Activated naive CD4-positive, alpha-beta T cell treated with anti-CD3 and anti-CD28 coated beads for 36 hours (primary cell): ENCODE measurements at regions of chr12 and their contacts with region 1.

Region 1: GRCh38 chr12:122726080-122726558 is 4.5 kb downstream of the HCAR1 start:
- DNase-seq: peak; percentile 61
- H3K4me3 Mint-ChIP-seq: peak overlapping the region; percentile 50
- H3K27ac Mint-ChIP-seq: peak overlapping the region; percentile 85
- H3K4me1 Mint-ChIP-seq: peaks cover 76% of the 10 kb centered on the region
- H3K27me3 Mint-ChIP-seq: no peaks in the 10 kb centered on the region

Region 2: GRCh38 chr12:122078141-122079032 is 647.7 kb before region 1 on chr12 and contains the start of gene MLXIP:
- CTCF ChIA-PET with region 1: no interaction called
- intact Hi-C with region 1: loop called (anchors 10 kb)
- DNase-seq: peak; percentile 91
- H3K4me3 Mint-ChIP-seq: peak within 1 kb of the TSS; percentile 85
- H3K27ac Mint-ChIP-seq: peak within 1 kb of the TSS; percentile 51
- H3K4me1 Mint-ChIP-seq: peaks cover 47% of the 10 kb centered on the region
- H3K27me3 Mint-ChIP-seq: no peaks in the 10 kb centered on the region
- total RNA-seq, gene MLXIP: 18.8 to 22.0 TPM

Region 3: GRCh38 chr12:122547330-122547729 is 178.8 kb before region 1 on chr12:
- CTCF ChIA-PET with region 1: no interaction called
- intact Hi-C with region 1: no loop called
- DNase-seq: no peak
- H3K4me3 Mint-ChIP-seq: no peak overlapping the region
- H3K27ac Mint-ChIP-seq: no peak overlapping the region
- H3K4me1 Mint-ChIP-seq: no peaks in the 10 kb centered on the region
- H3K27me3 Mint-ChIP-seq: no peaks in the 10 kb centered on the region

Region 4: DNA sequence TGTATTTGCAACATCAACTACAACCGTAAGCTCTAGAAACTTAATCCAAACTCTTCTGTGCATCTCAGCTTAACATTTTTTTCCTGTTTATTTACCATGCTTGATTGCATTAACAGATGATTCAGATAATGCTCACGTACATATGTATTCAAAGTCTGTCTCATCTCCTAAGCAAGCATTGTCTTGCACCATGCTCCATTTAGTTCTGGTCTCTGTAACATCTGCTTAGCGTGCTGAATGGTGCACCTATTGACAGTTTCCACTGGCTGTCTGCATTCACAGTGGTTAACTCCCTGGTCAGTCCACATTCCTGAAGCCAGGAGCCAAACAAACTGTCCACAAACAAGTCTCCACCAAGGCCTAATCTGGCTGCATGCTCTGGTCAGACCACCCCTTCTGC is 115.2 kb before region 1 on chr12:
- CTCF ChIA-PET with region 1: no interaction called
- intact Hi-C with region 1: no loop called
- DNase-seq: no peak
- H3K4me3 Mint-ChIP-seq: no peak overlapping the region
- H3K27ac Mint-ChIP-seq: no peak overlapping the region
- H3K4me1 Mint-ChIP-seq: no peaks in the 10 kb centered on the region
- H3K27me3 Mint-ChIP-seq: no peaks in the 10 kb centered on the region

Region 5: DNA sequence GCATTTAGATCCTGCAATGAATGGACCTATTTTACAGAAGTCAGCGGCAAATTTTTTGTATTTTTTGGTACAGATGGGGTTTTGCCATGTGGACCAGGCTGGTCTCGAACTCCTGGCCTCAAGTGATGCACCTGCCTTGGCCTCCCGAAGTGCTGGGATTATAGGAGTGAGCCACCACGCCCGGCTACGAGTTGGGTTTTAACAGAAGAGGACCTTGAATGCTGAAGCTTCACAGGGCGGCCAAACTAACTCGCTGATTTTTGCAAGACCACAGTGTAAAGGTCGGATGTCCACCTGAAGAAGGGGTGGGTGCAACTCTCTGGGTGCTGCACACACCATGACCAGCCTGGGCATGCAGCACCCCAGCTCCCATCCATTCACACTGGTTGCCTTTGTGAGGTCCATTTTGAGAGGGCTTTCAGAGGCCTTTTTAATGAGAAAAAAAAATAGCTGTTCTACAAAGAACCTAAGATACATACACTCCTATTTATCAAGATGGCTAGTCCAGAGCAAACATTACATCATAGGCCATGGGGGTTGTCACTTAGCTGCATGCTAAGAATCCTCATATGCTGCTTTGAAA is 567.1 kb after region 1 on chr12:
- CTCF ChIA-PET with region 1: no interaction called
- intact Hi-C with region 1: no loop called
- DNase-seq: no peak
- H3K4me3 Mint-ChIP-seq: no peak overlapping the region
- H3K27ac Mint-ChIP-seq: no peak overlapping the region
- H3K4me1 Mint-ChIP-seq: no peaks in the 10 kb centered on the region
- H3K27me3 Mint-ChIP-seq: no peaks in the 10 kb centered on the region